Endothelial cell of umbilical vein (primary cell): ENCODE measurements at regions of chr7 and their contacts with region 1.

Region 1: GRCh38 chr7:102464577-102465280 is at the starts of genes ALKBH4 and LRWD1:
- DNase-seq: peak; percentile 91
- H3K4me3 ChIP-seq: peak within 1 kb of the TSS; percentile 63 to 81 (median 70)
- H3K27ac ChIP-seq: peak within 1 kb of the TSS; percentile 28
- H3K4me1 ChIP-seq: peaks cover 9% of the 10 kb centered on the region
- H3K27me3 ChIP-seq: no peaks in the 10 kb centered on the region
- CTCF ChIP-seq: no peak
- POLR2A ChIP-seq: peak; percentile 71
- total RNA-seq, gene ALKBH4: 9.9 and 10.8 TPM in 2 replicates
- total RNA-seq, gene LRWD1: 22.7 and 25.3 TPM in 2 replicates

Region 2: DNA sequence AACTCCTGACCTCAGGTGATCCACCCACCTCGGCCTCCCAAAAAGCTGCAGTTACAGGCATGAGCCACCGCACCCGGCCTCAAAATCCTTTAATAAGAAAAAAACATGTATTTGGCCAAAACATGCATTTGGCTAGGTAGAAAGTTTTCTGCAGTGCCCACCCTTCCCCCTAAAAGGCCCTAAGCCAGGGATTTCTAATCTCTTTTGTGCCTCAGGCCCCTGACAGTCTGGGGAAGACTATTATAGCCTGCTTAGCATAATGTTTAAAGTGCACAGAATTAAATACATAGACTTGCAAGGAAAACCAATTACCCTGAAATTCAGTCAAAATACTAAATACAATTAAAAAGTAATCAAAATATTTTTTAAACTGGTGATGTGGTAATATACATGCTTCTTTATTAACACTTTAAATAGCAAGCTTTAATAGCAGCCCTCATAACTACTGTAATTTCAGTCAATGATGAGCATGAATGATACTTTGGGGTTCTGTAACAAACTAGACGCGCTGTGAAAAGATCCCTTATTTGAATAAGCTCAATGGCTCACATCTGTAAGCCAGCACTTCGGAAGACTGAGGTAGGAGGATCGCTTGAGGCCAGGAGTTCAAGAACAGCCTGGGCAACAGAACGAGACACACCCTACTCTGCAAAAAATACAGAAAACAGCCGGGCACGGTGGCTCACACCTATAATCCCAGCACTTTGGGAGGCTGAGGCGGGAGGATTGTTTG is 138.4 kb before region 1 on chr7:
- CTCF ChIA-PET with region 1: no interaction called
- POLR2A ChIA-PET with region 1: no interaction called
- dilution Hi-C with region 1: no loop called
- intact Hi-C with region 1: no loop called
- DNase-seq: no peak
- H3K4me3 ChIP-seq: no peak overlapping the region
- H3K27ac ChIP-seq: no peak overlapping the region
- H3K4me1 ChIP-seq: no peaks in the 10 kb centered on the region
- H3K27me3 ChIP-seq: peaks cover 2 to 3% of the 10 kb centered on the region in 2 experiments
- CTCF ChIP-seq: no peak
- POLR2A ChIP-seq: no peak

Region 3: DNA sequence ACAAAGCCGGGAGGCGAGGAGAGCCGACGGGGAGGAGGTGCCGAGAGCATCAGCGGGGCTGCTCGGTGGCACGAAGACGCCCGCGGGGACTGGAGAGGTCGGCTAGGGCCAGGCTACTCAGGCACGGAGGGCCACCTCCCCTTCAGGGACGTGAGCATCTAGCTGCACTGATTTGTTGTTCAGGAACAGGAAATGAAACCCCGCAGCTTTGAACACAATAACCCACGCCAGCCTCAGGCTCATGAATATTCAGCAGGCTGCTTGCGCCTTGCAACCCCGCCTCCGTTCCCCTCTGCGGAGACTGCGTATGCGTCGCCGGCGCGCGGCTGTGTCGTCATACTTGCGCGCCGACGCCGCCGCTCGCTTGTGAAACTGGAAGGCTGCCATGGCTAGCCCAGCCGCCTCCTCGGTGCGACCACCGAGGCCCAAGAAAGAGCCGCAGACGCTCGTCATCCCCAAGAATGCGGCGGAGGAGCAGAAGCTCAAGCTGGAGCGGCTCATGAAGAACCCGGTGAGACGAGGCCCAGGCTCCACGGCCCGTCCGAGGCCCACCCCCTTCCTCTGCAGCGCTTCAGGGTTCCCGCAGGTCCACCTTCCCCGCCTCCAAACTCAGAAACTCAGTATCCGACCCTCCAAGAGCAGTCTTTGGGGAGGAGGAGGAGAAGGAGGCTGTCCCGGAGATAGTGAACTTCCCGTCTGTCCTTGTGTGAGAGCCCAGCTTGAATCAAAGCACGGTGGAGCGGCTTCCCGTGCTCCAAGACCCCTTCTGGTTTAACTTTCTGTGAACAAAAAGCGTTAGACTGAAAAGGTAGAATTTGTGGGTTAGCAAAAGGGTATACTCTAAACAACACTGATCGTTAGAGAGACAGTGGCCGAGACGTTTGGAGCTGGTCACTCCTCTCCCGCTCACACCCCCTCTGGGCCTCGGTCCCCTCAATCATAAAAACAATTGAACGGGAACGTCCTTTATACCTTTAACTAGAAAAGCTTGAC is 68.4 kb before region 1 on chr7 and contains the start of gene PRKRIP1:
- CTCF ChIA-PET with region 1: no interaction called
- POLR2A ChIA-PET with region 1: no interaction called
- dilution Hi-C with region 1: no loop called
- intact Hi-C with region 1: loop called (anchors 1 kb)
- DNase-seq: peak; percentile 92
- H3K4me3 ChIP-seq: peak within 1 kb of the TSS; percentile 83 to 100 (median 91)
- H3K27ac ChIP-seq: peak within 1 kb of the TSS; percentile 80
- H3K4me1 ChIP-seq: peaks cover 13% of the 10 kb centered on the region
- H3K27me3 ChIP-seq: no peaks in the 10 kb centered on the region
- CTCF ChIP-seq: no peak
- POLR2A ChIP-seq: peak; percentile 83
- total RNA-seq, gene PRKRIP1: 25.7 and 26.1 TPM in 2 replicates

Region 4: DNA sequence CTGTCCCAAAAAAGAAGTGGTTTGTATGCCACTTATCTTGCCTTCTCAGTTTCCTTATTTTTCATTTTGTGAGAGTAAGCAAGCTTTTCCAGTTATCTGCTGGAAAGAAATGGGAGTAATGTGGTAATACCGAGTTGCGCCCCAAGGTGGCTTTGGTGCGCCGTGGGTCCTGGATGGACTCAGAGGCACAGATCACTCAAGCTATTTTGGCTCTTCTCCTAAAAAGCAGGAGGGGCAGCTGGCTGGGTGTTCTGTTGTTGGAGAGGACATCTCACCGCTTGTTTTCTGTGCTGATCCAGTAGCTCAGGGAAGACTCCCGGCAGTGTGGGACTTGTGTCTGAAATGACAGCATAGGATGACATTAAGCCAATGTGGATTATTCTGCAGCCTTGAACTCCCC is 52.2 kb before region 1 on chr7:
- CTCF ChIA-PET with region 1: interaction called, 6 read pairs
- POLR2A ChIA-PET with region 1: no interaction called
- dilution Hi-C with region 1: no loop called
- intact Hi-C with region 1: loop called (anchors 1 kb)
- DNase-seq: peak; percentile 38
- H3K4me3 ChIP-seq: no peak overlapping the region
- H3K27ac ChIP-seq: no peak overlapping the region
- H3K4me1 ChIP-seq: peaks cover 7% of the 10 kb centered on the region
- H3K27me3 ChIP-seq: no peaks in the 10 kb centered on the region
- CTCF ChIP-seq: peak; percentile 29 to 44
- POLR2A ChIP-seq: no peak

Region 5: GRCh38 chr7:102433219-102434038 is 31.3 kb before region 1 on chr7 and contains the start of gene ORAI2:
- CTCF ChIA-PET with region 1: interaction called, 3 read pairs
- POLR2A ChIA-PET with region 1: interaction called, 6 read pairs
- dilution Hi-C with region 1: no loop called
- intact Hi-C with region 1: loop called (anchors 1 kb)
- DNase-seq: peak; percentile 54
- H3K4me3 ChIP-seq: peak within 1 kb of the TSS; percentile 82 to 98 (median 83)
- H3K27ac ChIP-seq: peak within 1 kb of the TSS; percentile 54
- H3K4me1 ChIP-seq: peaks cover 6% of the 10 kb centered on the region
- H3K27me3 ChIP-seq: no peaks in the 10 kb centered on the region
- CTCF ChIP-seq: no peak
- POLR2A ChIP-seq: peak; percentile 62
- total RNA-seq, gene ORAI2: 67.4 and 84.1 TPM in 2 replicates